Vagina (tissue), 2 donors: ENCODE measurements at regions of chr2 and their contacts with region 1.

Region 1: GRCh38 chr2:175251425-175252041 is 70.0 kb upstream of the ATP5MC3 start:
- DNase-seq: no peak
- H3K4me3 ChIP-seq: no peak overlapping the region
- H3K27ac ChIP-seq: no peak overlapping the region
- H3K4me1 ChIP-seq: no peaks in the 10 kb centered on the region
- H3K27me3 ChIP-seq: no peaks in the 10 kb centered on the region
- CTCF ChIP-seq: peak; percentile 17 to 47 (median 34)
- POLR2A ChIP-seq: no peak

Region 2: GRCh38 chr2:176093145-176093897 is 841.8 kb after region 1 on chr2:
- intact Hi-C with region 1: loop called (anchors 5 kb)
- DNase-seq: no peak
- H3K4me3 ChIP-seq: peak overlapping the region; percentile 54 to 59
- H3K27ac ChIP-seq: peak overlapping the region; percentile 91
- H3K4me1 ChIP-seq: peaks cover 28% of the 10 kb centered on the region
- H3K27me3 ChIP-seq: no peaks in the 10 kb centered on the region
- CTCF ChIP-seq: no peak
- POLR2A ChIP-seq: peak in 1 of 2 donors; percentile 5